HEK293T (cell line): ENCODE measurements at regions of chr10 and their contacts with region 1.

Region 1: DNA sequence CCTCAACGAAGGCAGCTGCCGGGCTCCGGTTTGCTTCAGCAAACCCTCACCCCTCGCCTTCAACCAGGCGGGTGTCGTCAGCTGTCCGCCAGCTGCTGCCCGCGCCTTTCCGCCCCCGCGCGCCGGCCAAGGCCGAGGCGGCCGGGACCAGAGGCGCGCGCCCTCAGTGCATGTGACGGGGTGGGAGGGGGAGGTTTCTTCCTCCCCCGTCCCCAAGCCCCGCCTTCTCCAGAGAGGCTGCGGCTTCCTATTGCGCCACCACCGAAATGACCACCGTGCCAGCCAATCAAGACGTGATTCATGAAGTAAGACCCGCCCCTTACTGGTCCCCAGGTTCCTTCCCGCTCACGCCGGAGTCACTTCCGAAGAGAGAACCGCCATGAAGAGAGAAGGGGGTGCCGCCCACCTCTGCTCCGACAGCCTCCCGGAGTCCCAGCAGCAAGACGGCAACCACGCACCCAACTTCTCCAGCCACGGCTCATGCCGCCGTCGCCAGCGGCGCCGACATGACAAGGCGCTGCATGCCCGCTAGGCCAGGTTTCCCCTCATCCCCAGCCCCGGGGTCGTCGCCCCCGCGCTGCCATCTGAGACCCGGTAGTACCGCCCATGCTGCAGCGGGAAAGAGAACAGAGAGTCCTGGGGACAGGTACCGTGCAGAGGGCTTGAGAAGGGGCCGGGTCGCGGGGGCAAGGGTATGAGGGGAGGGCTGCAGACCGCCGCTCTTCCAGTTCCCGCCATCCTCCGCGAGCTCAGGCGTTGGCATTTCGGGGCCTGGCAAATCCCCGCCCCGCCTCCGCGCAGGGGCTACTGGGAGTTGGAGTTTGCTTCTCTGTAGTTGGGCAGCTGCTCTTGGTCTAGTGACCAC is at the start of gene SLF2:
- DNase-seq: peak; percentile 100

Region 2: DNA sequence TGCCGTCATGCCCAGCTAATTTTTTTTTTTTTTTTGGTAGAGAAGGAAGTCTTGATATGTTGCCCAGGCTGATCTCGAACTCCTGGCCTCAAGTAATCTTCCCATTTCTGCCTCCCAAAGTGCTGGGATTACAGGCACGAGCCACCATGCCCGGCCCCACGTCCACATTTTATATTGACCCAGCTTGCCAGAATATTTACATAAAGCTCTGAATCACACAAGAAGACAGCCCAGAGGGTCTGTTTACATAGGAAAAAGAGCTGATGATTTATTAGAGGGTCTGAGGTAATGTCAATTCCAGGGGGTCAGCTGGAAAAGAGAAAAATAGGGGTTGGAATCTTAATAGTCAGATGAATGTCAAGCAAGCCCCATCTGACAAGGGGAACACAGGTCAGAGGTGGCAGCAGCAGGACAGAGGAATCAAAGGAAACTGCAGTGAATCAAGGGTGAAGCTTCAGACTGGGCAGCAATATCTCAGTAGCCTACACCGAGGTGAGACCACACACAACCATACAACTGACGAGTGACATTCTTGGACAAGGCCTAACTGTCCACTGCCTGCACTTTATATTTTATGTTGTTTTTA is 15.9 kb before region 1 on chr10:
- CTCF ChIA-PET with region 1: interaction called, 3 read pairs
- POLR2A ChIA-PET with region 1: interaction called, 12 read pairs
- DNase-seq: peak; percentile 31

Region 3: DNA sequence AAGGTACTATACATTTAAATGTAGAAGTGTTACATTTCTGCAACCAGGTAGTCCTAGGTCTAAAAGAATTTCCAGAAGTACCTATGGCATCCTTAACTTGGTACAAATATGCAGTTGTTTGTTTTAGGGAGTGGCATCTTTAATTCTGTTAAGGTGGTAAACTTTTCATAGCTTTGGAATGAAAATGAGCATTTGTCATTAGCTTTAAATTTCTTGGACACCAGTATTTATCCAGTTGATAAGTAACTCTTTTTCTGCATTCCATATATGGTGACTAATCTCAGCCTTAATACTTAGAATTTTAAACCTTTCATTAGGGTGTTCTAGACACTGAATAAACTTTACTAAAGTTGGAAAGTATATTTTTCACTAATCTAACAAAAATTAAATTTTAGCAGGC is 10.7 kb after region 1 on chr10:
- CTCF ChIA-PET with region 1: no interaction called
- POLR2A ChIA-PET with region 1: interaction called, 12 read pairs
- DNase-seq: no peak

Region 4: GRCh38 chr10:101272229-101272868 is 359.5 kb after region 1 on chr10:
- CTCF ChIA-PET with region 1: no interaction called
- POLR2A ChIA-PET with region 1: no interaction called
- DNase-seq: peak; percentile 92